Activated CD8-positive, alpha-beta memory T cell treated with anti-CD3 and anti-CD28 coated beads, Interleukin-2, amount 10 ng/mL, durations not matched to agents 7 days and 5 days (primary cell): ENCODE measurements at regions of chr14 and their contacts with region 1.

Region 1: GRCh38 chr14:69574263-69574953 is at the start of gene CCDC177:
- DNase-seq: peak; percentile 79
- ATAC-seq: peak; percentile 76
- H3K4me3 Mint-ChIP-seq: peak within 1 kb of the TSS; percentile 46
- H3K27ac Mint-ChIP-seq: no peak within 1 kb of the TSS
- H3K4me1 Mint-ChIP-seq: peaks cover 13% of the 10 kb centered on the region
- H3K27me3 Mint-ChIP-seq: peaks cover 85% of the 10 kb centered on the region
- total RNA-seq, gene CCDC177: not detected

Region 2: GRCh38 chr14:69242311-69243224 is 331.8 kb before region 1 on chr14:
- CTCF ChIA-PET with region 1: interaction called, 13 read pairs
- DNase-seq: peak; percentile 68
- ATAC-seq: peak; percentile 77
- H3K4me3 Mint-ChIP-seq: no peak overlapping the region
- H3K27ac Mint-ChIP-seq: no peak overlapping the region
- H3K4me1 Mint-ChIP-seq: peaks cover 2% of the 10 kb centered on the region
- H3K27me3 Mint-ChIP-seq: no peaks in the 10 kb centered on the region

Region 3: GRCh38 chr14:69527635-69528034 is 46.8 kb before region 1 on chr14:
- CTCF ChIA-PET with region 1: no interaction called
- DNase-seq: no peak
- ATAC-seq: no peak
- H3K4me3 Mint-ChIP-seq: no peak overlapping the region
- H3K27ac Mint-ChIP-seq: no peak overlapping the region
- H3K4me1 Mint-ChIP-seq: peaks cover 3% of the 10 kb centered on the region
- H3K27me3 Mint-ChIP-seq: peaks cover 28% of the 10 kb centered on the region

Region 4: DNA sequence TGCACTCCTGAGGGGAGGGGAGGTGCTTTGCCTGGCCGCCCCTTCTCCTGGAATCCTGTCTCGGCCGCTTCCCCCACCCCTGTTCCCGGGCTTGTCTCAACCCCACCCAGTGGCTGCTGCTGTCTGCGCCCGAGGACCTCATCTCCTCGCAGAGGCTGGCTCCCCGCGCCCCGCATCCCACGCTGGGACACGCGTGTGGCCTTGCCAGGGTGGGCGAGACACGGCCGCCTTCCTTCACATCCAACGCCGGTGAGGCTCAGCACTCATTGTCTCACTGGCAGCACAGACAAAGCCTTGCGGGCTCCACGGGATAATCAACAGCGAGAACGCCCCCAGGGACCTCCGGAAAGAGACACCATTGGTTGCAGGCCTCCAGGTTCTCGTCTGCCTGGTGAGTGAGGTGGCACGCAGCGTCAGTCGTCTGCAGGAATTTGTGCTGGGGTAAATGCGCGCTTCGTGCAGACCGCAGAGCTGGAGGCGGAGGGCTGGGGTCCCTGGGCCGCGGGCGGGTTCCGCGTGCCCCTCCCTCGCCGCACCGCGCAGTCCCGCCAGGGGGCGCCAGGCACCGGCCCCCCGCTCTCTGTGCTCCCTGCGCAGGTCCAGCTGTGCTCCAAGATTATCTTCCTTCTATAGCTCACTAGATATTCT is 26.6 kb before region 1 on chr14:
- CTCF ChIA-PET with region 1: interaction called, 12 read pairs
- DNase-seq: peak; percentile 43
- ATAC-seq: peak; percentile 40
- H3K4me3 Mint-ChIP-seq: no peak overlapping the region
- H3K27ac Mint-ChIP-seq: no peak overlapping the region
- H3K4me1 Mint-ChIP-seq: peaks cover 19% of the 10 kb centered on the region
- H3K27me3 Mint-ChIP-seq: peaks cover 55% of the 10 kb centered on the region

Region 5: GRCh38 chr14:69559581-69560011 is 14.8 kb before region 1 on chr14:
- CTCF ChIA-PET with region 1: interaction called, 13 read pairs
- DNase-seq: no peak
- ATAC-seq: no peak
- H3K4me3 Mint-ChIP-seq: no peak overlapping the region
- H3K27ac Mint-ChIP-seq: no peak overlapping the region
- H3K4me1 Mint-ChIP-seq: no peaks in the 10 kb centered on the region
- H3K27me3 Mint-ChIP-seq: peaks cover 74% of the 10 kb centered on the region